ENCODE measurements at regions of chr5 and their contacts with region 1.

Region 1: GRCh38 chr5:156402387-156402921 is 75.5 kb downstream of the SGCD start:
- DNase-seq: peak; percentile 52
- ATAC-seq: peak; percentile 85
- H3K4me3 Mint-ChIP-seq: peak overlapping the region; percentile 66
- H3K27ac Mint-ChIP-seq: peak overlapping the region; percentile 88
- H3K4me1 Mint-ChIP-seq: peaks cover 18% of the 10 kb centered on the region
- H3K27me3 Mint-ChIP-seq: no peaks in the 10 kb centered on the region
- CTCF ChIP-seq: no peak

Region 2: DNA sequence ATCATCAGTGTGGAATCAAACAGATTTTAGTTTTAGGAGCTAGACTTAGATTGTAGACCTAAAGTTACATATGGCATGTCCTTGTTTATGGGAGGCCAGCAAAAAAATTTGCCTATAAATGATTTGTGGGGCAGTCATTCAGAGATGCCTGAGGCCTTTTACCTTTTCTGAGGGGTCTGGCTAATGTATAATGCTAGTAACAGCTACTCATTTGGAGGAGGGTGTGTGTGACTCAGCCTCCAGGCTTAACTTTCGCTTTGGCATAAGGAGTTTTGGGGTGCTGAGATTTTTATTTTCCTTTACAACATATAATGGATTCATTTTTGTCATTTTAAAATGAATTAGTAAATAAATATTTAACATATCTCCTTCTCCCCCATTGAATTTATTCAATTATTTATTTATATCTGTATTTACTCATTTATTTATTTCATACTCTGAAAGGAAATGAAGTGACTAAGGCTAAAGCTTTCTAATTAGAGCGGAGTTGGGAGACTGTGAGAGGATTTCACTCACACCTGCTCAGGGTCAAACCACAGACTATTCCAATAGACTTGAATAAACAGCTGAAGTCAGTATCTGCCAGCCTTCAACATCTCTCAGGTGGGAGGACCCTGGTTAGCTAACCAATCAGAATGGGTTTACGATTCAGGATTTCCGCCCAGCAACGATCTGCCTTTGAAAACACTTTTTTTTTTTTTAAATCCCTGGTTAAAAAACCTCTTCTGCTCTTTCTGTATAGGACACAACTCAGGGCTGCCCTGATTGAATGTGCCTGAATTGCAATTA is 563.0 kb before region 1 on chr5:
- CTCF ChIA-PET with region 1: no interaction called
- POLR2A ChIA-PET with region 1: no interaction called
- intact Hi-C with region 1: no loop called
- DNase-seq: no peak
- ATAC-seq: no peak
- H3K4me3 Mint-ChIP-seq: no peak overlapping the region
- H3K27ac Mint-ChIP-seq: no peak overlapping the region
- H3K4me1 Mint-ChIP-seq: no peaks in the 10 kb centered on the region
- H3K27me3 Mint-ChIP-seq: no peaks in the 10 kb centered on the region
- CTCF ChIP-seq: no peak

Region 3: DNA sequence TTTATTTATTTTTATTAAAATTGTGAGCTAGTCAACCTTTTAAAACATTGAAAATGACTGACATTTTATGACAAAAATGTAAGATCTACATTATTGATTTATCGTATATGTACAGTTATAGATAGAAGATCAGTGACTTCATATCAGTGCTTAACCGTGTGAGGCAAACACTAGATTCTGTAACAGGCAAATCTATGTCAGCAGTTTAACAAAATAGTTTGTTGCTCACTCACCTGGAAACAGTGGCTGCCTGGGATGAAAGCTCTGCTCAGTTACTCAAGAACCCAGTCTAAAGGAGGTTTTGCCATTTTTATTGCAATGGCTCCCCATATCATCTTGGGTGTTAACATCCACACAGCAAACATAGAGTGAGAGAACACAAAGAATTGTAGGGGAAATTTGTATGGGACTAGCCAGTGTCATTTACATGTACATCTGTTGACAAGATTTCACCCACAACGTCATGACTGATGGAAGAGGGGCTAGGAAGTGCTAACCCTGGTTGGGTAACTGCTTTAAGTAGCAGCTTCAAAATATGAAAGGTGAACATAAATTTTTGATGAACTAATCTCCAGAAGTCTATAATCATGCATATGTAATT is 26.5 kb before region 1 on chr5:
- CTCF ChIA-PET with region 1: no interaction called
- POLR2A ChIA-PET with region 1: no interaction called
- intact Hi-C with region 1: loop called (anchors 1 kb)
- DNase-seq: no peak
- ATAC-seq: no peak
- H3K4me3 Mint-ChIP-seq: no peak overlapping the region
- H3K27ac Mint-ChIP-seq: no peak overlapping the region
- H3K4me1 Mint-ChIP-seq: peaks cover 10% of the 10 kb centered on the region
- H3K27me3 Mint-ChIP-seq: no peaks in the 10 kb centered on the region
- CTCF ChIP-seq: no peak

Measured in activated B cell treated with CpG ODN at 0.5 μM for 24 hours (primary cell).